Endothelial cell of umbilical vein (primary cell): ENCODE measurements at regions of chr7 and their contacts with region 1.

Region 1: GRCh38 chr7:46695051-46695707 is 774.1 kb upstream of the IGFBP3 start:
- DNase-seq: no peak
- H3K4me3 ChIP-seq: no peak overlapping the region
- H3K27ac ChIP-seq: no peak overlapping the region
- H3K4me1 ChIP-seq: no peaks in the 10 kb centered on the region
- H3K27me3 ChIP-seq: no peaks in the 10 kb centered on the region
- CTCF ChIP-seq: no peak
- POLR2A ChIP-seq: no peak

Region 2: DNA sequence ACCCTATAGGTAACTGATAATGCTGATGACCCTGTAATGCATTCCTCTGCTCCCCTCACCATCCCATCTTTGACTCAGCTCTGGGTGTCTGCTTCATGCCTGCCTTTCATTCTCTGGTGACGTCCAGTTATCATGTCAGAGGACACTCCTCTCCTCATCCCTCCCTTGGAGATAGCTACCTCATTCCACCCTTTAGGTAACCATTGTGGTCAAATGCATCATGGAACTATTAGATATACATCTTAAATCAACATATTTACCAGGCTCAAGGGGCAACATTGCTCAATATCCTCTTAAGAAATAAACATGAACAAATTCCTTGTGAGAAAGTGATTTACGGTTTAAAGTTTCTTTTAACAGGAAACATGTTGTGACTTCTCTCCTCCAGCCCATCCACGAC is 262.5 kb before region 1 on chr7:
- CTCF ChIA-PET with region 1: no interaction called
- POLR2A ChIA-PET with region 1: no interaction called
- dilution Hi-C with region 1: no loop called
- intact Hi-C with region 1: no loop called
- DNase-seq: no peak
- H3K4me3 ChIP-seq: no peak overlapping the region
- H3K27ac ChIP-seq: no peak overlapping the region
- H3K4me1 ChIP-seq: no peaks in the 10 kb centered on the region
- H3K27me3 ChIP-seq: no peaks in the 10 kb centered on the region
- CTCF ChIP-seq: no peak
- POLR2A ChIP-seq: no peak

Region 3: GRCh38 chr7:47100817-47101435 is 405.7 kb after region 1 on chr7:
- CTCF ChIA-PET with region 1: interaction called, 12 read pairs
- POLR2A ChIA-PET with region 1: no interaction called
- dilution Hi-C with region 1: no loop called
- intact Hi-C with region 1: no loop called
- DNase-seq: peak; percentile 73
- H3K4me3 ChIP-seq: no peak overlapping the region
- H3K27ac ChIP-seq: no peak overlapping the region
- H3K4me1 ChIP-seq: no peaks in the 10 kb centered on the region
- H3K27me3 ChIP-seq: no peaks in the 10 kb centered on the region
- CTCF ChIP-seq: peak; percentile 69 to 79
- POLR2A ChIP-seq: no peak